ENCODE measurements at regions of chr2 and their contacts with region 1.

Region 1: DNA sequence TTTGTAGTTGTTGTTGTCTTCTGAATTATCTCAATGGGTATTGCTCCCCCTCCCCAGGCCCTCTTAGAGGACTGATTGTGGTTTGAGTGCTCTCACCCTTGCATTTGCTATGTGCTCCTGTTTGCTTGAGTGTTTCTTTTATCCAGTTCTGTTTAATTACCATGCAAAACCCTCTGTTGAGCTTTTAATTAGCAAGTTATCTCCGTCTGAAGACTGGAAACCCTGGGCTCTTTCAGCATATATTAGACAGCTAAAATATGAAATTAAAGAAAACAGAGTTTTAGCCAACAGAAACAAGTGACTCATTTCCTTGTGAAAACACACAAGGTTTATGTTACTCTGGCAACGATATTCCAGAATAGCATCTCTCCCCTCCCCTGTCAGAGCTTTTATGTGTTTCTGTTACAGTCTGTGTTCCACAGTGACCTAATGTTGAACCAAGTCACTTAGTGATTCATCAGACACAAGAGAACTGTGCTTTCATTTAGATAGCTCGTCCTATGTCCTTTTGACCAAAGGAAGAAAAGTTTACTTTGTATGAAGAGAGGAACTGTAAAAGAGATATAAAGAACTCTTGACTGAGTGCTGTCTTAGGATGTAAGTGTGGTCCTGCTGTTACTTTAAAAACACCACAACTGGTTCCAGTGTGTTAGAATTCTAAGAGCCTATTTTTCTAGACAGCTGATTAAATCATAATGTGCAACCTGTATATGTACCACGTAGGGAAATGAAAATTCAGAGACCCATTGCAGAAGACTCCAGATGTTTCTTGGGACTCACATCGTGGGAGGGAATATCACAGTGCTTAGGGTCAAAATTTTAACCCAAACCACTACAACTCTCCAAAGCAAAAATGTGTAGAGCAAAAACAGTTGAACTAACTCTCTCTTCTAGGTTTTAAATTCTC is 172.8 kb upstream of the RBMS1 start:
- DNase-seq: no peak
- H3K4me3 ChIP-seq: peak overlapping the region in 1 of 2 donors; percentile 31
- H3K27ac ChIP-seq: peak overlapping the region; percentile 58 to 78
- H3K4me1 ChIP-seq: peaks cover 0 to 18% of the 10 kb centered on the region in 2 donors
- H3K27me3 ChIP-seq: no peaks in the 10 kb centered on the region
- CTCF ChIP-seq: no peak

Region 2: DNA sequence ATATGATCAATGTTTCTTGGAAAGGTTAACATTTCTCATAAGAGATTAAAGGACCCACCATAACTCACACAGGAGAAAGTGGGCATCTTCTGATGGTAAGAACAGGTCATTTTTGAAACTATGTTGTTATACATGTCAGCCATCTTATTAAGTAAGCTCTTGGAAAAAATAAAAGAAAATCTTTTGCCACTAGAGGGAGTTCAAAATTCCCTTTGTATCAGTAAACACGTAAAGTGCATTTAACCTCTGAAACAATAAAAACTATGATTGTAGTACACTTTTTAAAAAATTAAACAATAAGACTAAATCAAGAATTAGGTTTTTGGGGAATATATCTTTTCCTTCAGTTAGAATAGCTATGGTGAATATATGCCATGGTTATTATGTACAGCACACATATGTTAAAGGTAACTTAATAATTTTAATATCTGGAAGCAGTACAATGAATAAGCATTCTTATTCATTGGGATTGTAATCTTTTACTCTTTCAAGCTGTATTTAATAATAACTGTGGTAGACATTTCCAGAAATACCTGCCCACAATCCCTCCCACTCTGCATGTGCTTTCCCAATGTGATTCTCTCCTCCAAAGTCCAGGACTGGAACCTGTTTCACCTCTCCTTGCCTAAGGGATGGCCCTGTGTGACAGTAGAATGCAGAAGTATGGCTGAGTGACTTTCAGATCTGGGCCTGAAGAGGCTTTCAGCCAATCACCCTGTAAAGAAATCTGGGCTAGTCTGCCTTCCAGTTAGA is 237.0 kb before region 1 on chr2:
- intact Hi-C with region 1: loop called (anchors 5 kb)
- DNase-seq: no peak
- H3K4me3 ChIP-seq: no peak overlapping the region
- H3K27ac ChIP-seq: peak overlapping the region; percentile 77 to 89
- H3K4me1 ChIP-seq: peaks cover 5 to 28% of the 10 kb centered on the region in 2 donors
- H3K27me3 ChIP-seq: no peaks in the 10 kb centered on the region
- CTCF ChIP-seq: peak; percentile 45 to 57 (median 55)

Region 3: GRCh38 chr2:160482673-160483072 is 183.7 kb before region 1 on chr2:
- intact Hi-C with region 1: no loop called
- DNase-seq: no peak
- H3K4me3 ChIP-seq: no peak overlapping the region
- H3K27ac ChIP-seq: no peak overlapping the region
- H3K4me1 ChIP-seq: peaks cover 0 to 18% of the 10 kb centered on the region in 2 donors
- H3K27me3 ChIP-seq: no peaks in the 10 kb centered on the region
- CTCF ChIP-seq: no peak

Region 4: DNA sequence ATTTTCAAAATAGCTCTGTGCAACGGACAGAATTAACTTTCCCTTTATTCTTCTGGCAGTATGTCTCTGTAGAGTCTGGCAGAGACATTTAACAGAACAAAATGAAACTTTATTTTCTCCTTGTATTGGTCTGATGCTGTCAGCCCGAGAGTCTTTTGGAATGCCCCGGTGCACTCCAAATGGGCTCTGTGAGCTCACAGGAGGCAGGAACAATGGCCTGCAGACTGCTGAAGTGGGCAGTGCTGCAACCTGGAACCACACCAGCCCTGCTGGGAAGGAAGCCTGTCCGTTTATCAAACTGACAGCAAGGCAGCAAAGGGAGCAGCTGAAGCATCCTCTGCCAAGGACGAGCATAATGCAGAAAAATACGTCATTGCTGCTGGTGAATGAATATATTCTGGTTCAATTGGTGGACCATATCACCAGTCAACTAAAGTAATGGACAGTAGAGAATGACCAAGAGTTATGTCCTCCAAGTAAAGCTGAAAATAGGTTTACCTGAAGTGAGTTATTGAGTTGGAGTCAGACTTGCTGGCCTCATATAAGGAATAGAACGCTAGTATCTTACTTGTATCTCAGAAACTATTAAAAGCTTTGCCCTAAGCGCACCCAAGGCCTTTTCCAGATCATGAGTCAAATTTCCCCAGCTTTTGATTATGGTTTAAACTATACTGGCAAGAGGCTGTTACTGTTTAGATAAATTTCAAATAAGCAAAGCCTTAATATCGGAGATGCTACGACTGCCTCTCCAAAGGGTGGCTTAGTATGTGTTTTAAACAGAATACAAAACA is 286.3 kb after region 1 on chr2:
- intact Hi-C with region 1: loop called (anchors 10 kb)
- DNase-seq: no peak
- H3K4me3 ChIP-seq: peak overlapping the region; percentile 32 to 40
- H3K27ac ChIP-seq: peak overlapping the region; percentile 54 to 58
- H3K4me1 ChIP-seq: peaks cover 0 to 17% of the 10 kb centered on the region in 2 donors
- H3K27me3 ChIP-seq: no peaks in the 10 kb centered on the region
- CTCF ChIP-seq: no peak

Measured in ascending aorta (tissue), 2 donors.